ENCODE measurements at regions of chr14 and their contacts with region 1.

Region 1: GRCh38 chr14:20697273-20698017 is 8.9 kb downstream of the ANG start:
- DNase-seq: peak; percentile 61 to 77
- H3K4me3 ChIP-seq: no peak overlapping the region
- H3K4me3 Mint-ChIP-seq: no peak overlapping the region
- H3K27ac Mint-ChIP-seq: no peak overlapping the region
- H3K4me1 ChIP-seq: no peaks in the 10 kb centered on the region
- H3K4me1 Mint-ChIP-seq: peaks cover 7% of the 10 kb centered on the region
- H3K27me3 ChIP-seq: no peaks in the 10 kb centered on the region
- H3K27me3 Mint-ChIP-seq: no peaks in the 10 kb centered on the region
- CTCF ChIP-seq: peak; percentile 69 to 77

Region 2: GRCh38 chr14:20799892-20800544 is 102.6 kb after region 1 on chr14:
- CTCF ChIA-PET with region 1: interaction called, 3 read pairs
- POLR2A ChIA-PET with region 1: no interaction called
- intact Hi-C with region 1: loop called (anchors 5 kb)
- DNase-seq: peak; percentile 69 to 81
- H3K4me3 ChIP-seq: no peak overlapping the region; the same call in 1 of the 2 replicates
- H3K4me3 Mint-ChIP-seq: peak overlapping the region; percentile 63
- H3K27ac Mint-ChIP-seq: peak overlapping the region; percentile 84
- H3K4me1 ChIP-seq: peaks cover 45% of the 10 kb centered on the region
- H3K4me1 Mint-ChIP-seq: peaks cover 42% of the 10 kb centered on the region
- H3K27me3 ChIP-seq: no peaks in the 10 kb centered on the region
- H3K27me3 Mint-ChIP-seq: no peaks in the 10 kb centered on the region
- CTCF ChIP-seq: no peak

Region 3: DNA sequence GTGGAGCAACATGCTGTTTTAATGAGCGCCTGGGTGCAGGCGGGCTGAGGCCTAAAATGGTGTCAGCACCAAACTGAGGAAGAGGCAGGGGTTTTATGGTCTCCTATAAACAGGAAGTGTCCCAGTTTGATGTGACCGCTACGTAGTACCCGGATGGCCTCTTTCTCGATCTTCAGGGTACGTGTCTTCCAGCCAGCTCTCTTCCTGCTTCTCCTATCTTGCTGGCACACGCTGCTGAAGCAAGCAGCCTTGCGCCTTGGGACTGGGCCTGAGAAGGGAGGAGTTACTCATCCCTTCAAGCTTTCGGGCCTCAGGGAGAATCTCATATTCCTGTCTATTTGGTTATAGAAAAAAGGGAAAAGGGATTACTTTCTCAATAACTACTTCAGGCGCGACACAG is 133.4 kb after region 1 on chr14:
- CTCF ChIA-PET with region 1: no interaction called
- POLR2A ChIA-PET with region 1: no interaction called
- intact Hi-C with region 1: no loop called
- DNase-seq: no peak
- H3K4me3 ChIP-seq: no peak overlapping the region
- H3K4me3 Mint-ChIP-seq: no peak overlapping the region
- H3K27ac Mint-ChIP-seq: no peak overlapping the region
- H3K4me1 ChIP-seq: no peaks in the 10 kb centered on the region
- H3K4me1 Mint-ChIP-seq: peaks cover 14% of the 10 kb centered on the region
- H3K27me3 ChIP-seq: no peaks in the 10 kb centered on the region
- H3K27me3 Mint-ChIP-seq: no peaks in the 10 kb centered on the region
- CTCF ChIP-seq: no peak

Region 4: GRCh38 chr14:20866963-20867362 is 169.5 kb after region 1 on chr14:
- CTCF ChIA-PET with region 1: no interaction called
- POLR2A ChIA-PET with region 1: no interaction called
- intact Hi-C with region 1: loop called (anchors 1 kb)
- DNase-seq: peak in 1 of 2 experiments; percentile 26
- H3K4me3 ChIP-seq: no peak overlapping the region
- H3K4me3 Mint-ChIP-seq: no peak overlapping the region
- H3K27ac Mint-ChIP-seq: no peak overlapping the region
- H3K4me1 ChIP-seq: no peaks in the 10 kb centered on the region
- H3K4me1 Mint-ChIP-seq: no peaks in the 10 kb centered on the region
- H3K27me3 ChIP-seq: no peaks in the 10 kb centered on the region; the same call in 1 of the 2 replicates
- H3K27me3 Mint-ChIP-seq: peaks cover 24% of the 10 kb centered on the region
- CTCF ChIP-seq: peak; percentile 32 to 67

Measured in Caco-2 (cell line).